Heart left ventricle (tissue), 16 donors: ENCODE measurements at regions of chr4 and their contacts with region 1.

Region 1: DNA sequence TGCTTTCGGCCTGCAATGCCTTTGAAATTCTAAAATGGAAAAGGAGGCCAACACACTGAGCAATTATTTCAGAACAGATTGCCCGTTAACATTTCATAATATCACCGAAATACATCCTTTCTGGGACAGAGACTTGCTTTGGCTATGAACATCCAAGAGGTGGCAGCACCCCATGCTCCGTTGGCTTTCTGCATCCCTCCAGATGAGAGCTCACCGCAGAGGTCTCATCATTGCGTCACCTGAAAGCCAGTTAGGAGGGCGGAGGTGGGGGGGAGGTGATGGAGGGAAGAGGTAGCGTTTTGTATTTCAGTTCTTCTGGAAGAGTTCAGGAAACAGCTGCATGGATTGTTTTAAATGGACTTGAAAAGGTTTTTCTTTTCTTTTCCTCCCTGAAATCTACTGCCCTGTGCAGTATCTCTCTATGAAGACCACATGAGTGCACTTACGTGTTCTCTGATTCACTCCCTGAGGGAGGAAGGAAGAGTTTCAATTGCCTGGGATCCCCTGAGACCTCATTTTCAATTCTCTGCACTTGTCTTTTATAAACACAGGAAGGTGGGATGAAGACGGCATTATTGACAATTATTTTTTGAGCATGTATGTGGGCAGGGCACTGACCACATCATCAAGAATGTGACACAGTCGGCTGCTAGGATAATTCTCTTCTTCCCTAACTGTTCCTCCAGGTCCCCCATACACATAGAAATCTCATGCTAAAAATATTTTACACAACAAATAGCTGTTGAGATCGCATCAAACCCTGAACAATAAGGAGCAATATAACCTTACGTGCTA is 166.9 kb upstream of the PGRMC2 start:
- DNase-seq: peak; percentile 76 to 84 (median 81)
- ATAC-seq: peak; percentile 72 to 93 (median 90)
- H3K4me3 ChIP-seq: peak overlapping the region in 2 of 12 donors; percentile 1
- H3K27ac ChIP-seq: peak overlapping the region in 1 of 12 donors; percentile 6
- H3K4me1 ChIP-seq: peaks cover 0 to 19% (median 10%) of the 10 kb centered on the region in 12 donors
- H3K27me3 ChIP-seq: no peaks in the 10 kb centered on the region
- CTCF ChIP-seq: peak; percentile 66 to 87 (median 81)
- POLR2A ChIP-seq: no peak

Region 2: GRCh38 chr4:128542041-128542440 is 87.6 kb after region 1 on chr4:
- intact Hi-C with region 1: loop called in 1 of 10 experiments (anchors 10 kb)
- DNase-seq: no peak
- ATAC-seq: no peak
- H3K4me3 ChIP-seq: no peak overlapping the region
- H3K27ac ChIP-seq: no peak overlapping the region
- H3K4me1 ChIP-seq: peaks cover 0 to 10% (median under 1%) of the 10 kb centered on the region in 12 donors
- H3K27me3 ChIP-seq: no peaks in the 10 kb centered on the region
- CTCF ChIP-seq: no peak
- POLR2A ChIP-seq: no peak

Region 3: GRCh38 chr4:128558896-128559679 is 104.6 kb after region 1 on chr4:
- intact Hi-C with region 1: loop called in 5 of 10 experiments (anchors 5 to 10 kb)
- DNase-seq: no peak
- ATAC-seq: peak in 3 of 4 donors; percentile 54 to 63 (median 63)
- H3K4me3 ChIP-seq: no peak overlapping the region
- H3K27ac ChIP-seq: peak overlapping the region in 4 of 12 donors; percentile 21 to 74 (median 32)
- H3K4me1 ChIP-seq: peaks cover 0 to 20% (median 2%) of the 10 kb centered on the region in 12 donors
- H3K27me3 ChIP-seq: no peaks in the 10 kb centered on the region
- CTCF ChIP-seq: no peak
- POLR2A ChIP-seq: no peak

Region 4: GRCh38 chr4:128635141-128635954 is 180.9 kb after region 1 on chr4:
- intact Hi-C with region 1: loop called in 2 of 10 experiments (anchors 10 kb)
- DNase-seq: peak; percentile 86 to 95 (median 89)
- ATAC-seq: peak; percentile 70 to 91 (median 91)
- H3K4me3 ChIP-seq: peak overlapping the region in 7 of 12 donors; percentile 3 to 29 (median 20)
- H3K27ac ChIP-seq: peak overlapping the region; percentile 67 to 85 (median 80)
- H3K4me1 ChIP-seq: peaks cover 0 to 24% (median 11%) of the 10 kb centered on the region in 12 donors
- H3K27me3 ChIP-seq: no peaks in the 10 kb centered on the region
- CTCF ChIP-seq: no peak
- POLR2A ChIP-seq: no peak

Region 5: GRCh38 chr4:128675083-128675482 is 220.6 kb after region 1 on chr4:
- intact Hi-C with region 1: loop called in 1 of 10 experiments (anchors 10 kb)
- DNase-seq: no peak
- ATAC-seq: peak; percentile 45 to 77 (median 65)
- H3K4me3 ChIP-seq: no peak overlapping the region
- H3K27ac ChIP-seq: peak overlapping the region in 2 of 12 donors; percentile 2 to 34
- H3K4me1 ChIP-seq: peaks cover 0 to 6% (median 0%) of the 10 kb centered on the region in 12 donors
- H3K27me3 ChIP-seq: no peaks in the 10 kb centered on the region
- CTCF ChIP-seq: peak in 4 of 12 donors; percentile 17 to 40 (median 22)
- POLR2A ChIP-seq: no peak